H1 (cell line): ENCODE measurements at regions of chr6 and their contacts with region 1.

Region 1: GRCh38 chr6:166603043-166603690 is 16.7 kb upstream of the RAMACL start:
- DNase-seq: no peak
- H3K4me3 ChIP-seq: no peak overlapping the region
- H3K27ac ChIP-seq: no peak overlapping the region
- H3K4me1 ChIP-seq: peaks cover 0 to 4% (median 0%) of the 10 kb centered on the region in 4 experiments; a peak in 4 of 7 replicates
- H3K27me3 ChIP-seq: no peaks in the 10 kb centered on the region; a peak in 1 of 7 replicates
- CTCF ChIP-seq: no peak
- EP300 ChIP-seq: no peak
- POLR2A ChIP-seq: no peak
- RAD21 ChIP-seq: no peak

Region 2: GRCh38 chr6:166556871-166557322 is 46.3 kb before region 1 on chr6:
- CTCF ChIA-PET with region 1: no interaction called
- POLR2A ChIA-PET with region 1: no interaction called
- DNase-seq: no peak
- H3K4me3 ChIP-seq: no peak overlapping the region
- H3K27ac ChIP-seq: no peak overlapping the region
- H3K4me1 ChIP-seq: peaks cover 0 to 10% (median 8%) of the 10 kb centered on the region in 4 experiments
- H3K27me3 ChIP-seq: no peaks in the 10 kb centered on the region
- CTCF ChIP-seq: no peak
- EP300 ChIP-seq: no peak
- POLR2A ChIP-seq: no peak
- RAD21 ChIP-seq: no peak

Region 3: GRCh38 chr6:166615059-166615770 is 12.0 kb after region 1 on chr6:
- CTCF ChIA-PET with region 1: interaction called, 17 read pairs
- POLR2A ChIA-PET with region 1: interaction called, 4 read pairs
- DNase-seq: no peak
- H3K4me3 ChIP-seq: no peak overlapping the region
- H3K27ac ChIP-seq: no peak overlapping the region
- H3K4me1 ChIP-seq: peaks cover 0 to 5% (median 2%) of the 10 kb centered on the region in 4 experiments; a peak in 5 of 7 replicates
- H3K27me3 ChIP-seq: no peaks in the 10 kb centered on the region
- CTCF ChIP-seq: no peak
- EP300 ChIP-seq: no peak
- POLR2A ChIP-seq: no peak
- RAD21 ChIP-seq: no peak